PC-9 (cell line): ENCODE measurements at regions of chr14 and their contacts with region 1.

Region 1: DNA sequence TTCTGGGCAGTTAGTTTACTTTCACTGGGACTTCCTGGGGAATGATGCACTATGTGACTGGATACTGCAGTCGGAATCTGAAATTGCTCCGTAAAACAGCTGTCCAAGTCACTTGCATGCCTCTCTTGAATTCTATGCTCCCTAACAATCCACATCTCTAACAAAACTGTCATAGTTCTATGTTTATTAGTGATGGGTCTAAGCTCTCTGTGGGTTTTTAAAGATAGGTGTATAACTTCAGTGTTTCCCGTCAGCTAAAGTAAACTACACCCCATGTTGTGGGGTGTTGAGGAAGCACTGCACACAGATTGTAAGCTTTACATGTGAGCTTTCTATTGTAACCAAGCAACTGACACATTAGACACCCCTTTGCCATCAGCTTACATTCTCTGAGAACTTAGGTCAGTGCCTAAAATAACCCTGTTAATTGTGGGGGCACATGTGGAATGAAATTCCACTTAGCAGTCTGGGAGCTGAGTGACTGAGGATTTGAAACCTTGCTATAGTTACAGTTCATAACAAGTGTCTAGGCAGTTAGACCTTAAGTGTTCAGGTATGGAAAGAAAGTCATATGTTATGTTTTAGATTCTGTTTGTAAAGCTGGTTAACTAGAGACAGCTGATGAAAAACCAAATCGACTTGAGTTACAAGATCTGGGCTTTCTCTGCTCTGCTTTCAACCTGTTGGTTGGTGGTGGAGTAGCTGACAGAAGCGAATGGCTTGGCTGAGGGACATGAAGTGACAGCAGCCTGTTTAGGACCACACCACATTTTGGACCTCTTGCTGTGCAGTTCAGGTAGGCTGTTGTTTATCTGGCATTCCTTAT is 165.7 kb downstream of the AKAP6 start:
- DNase-seq: no peak
- H3K4me3 ChIP-seq: no peak overlapping the region
- H3K27ac ChIP-seq: no peak overlapping the region
- H3K4me1 ChIP-seq: no peaks in the 10 kb centered on the region
- H3K27me3 ChIP-seq: no peaks in the 10 kb centered on the region
- CTCF ChIP-seq: no peak

Region 2: GRCh38 chr14:30993071-30993470 is 1501.8 kb before region 1 on chr14:
- CTCF ChIA-PET with region 1: no interaction called
- POLR2A ChIA-PET with region 1: interaction called, 14 read pairs
- intact Hi-C with region 1: no loop called
- DNase-seq: no peak
- H3K4me3 ChIP-seq: no peak overlapping the region
- H3K27ac ChIP-seq: no peak overlapping the region
- H3K4me1 ChIP-seq: no peaks in the 10 kb centered on the region
- H3K27me3 ChIP-seq: no peaks in the 10 kb centered on the region
- CTCF ChIP-seq: no peak

Region 3: GRCh38 chr14:32531942-32532515 is 37.2 kb after region 1 on chr14:
- CTCF ChIA-PET with region 1: no interaction called
- POLR2A ChIA-PET with region 1: no interaction called
- intact Hi-C with region 1: no loop called
- DNase-seq: no peak
- H3K4me3 ChIP-seq: no peak overlapping the region
- H3K27ac ChIP-seq: no peak overlapping the region
- H3K4me1 ChIP-seq: no peaks in the 10 kb centered on the region
- H3K27me3 ChIP-seq: no peaks in the 10 kb centered on the region
- CTCF ChIP-seq: no peak